ENCODE measurements at regions of chr4 and their contacts with region 1.

Region 1: DNA sequence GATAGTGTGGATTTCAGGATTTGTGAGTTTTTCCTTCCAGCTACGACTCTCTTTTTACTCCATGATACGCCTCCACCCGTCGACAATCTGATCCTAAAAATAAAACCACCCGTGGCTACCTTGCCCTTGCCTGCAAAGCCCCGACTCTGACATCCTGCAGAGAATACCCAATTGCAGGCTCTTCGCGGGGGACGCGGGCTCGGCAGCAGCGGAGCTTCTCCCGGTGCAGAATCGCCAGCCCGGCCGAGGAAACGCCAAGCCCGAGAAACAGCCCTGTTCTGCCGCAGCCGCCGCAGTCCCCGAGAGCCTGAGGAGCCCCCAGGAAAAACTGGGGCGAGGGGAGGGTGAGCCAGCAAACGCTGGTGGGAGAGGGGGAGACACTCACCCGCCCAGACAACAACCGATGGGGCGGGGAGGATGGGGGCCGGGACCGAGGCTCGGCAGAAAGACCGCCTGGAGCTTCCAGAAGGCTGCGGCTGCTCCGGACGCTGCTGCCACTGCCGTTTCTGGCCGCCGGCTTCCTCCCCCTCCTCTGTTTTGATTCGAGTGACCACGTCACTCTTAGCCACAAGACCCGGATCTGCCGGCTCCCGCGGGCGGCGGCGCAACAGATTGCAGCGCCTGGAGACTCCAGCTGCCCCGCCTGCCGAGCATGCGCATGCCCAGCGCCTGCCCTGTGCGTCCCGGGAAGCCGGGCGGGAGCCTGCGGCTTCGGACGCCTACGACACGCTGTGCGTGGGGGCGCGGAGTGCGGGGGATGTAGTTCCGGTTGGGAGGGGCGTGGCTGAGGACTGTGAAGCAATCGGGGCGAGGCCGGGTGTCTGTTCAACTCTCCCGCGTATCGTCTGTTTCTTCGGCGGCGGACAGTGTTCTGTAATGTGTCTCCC is at the start of gene SMIM14:
- DNase-seq: peak; percentile 92
- ATAC-seq: peak; percentile 82
- H3K4me3 Mint-ChIP-seq: peak within 1 kb of the TSS; percentile 96
- H3K27ac Mint-ChIP-seq: peak within 1 kb of the TSS; percentile 97
- H3K4me1 Mint-ChIP-seq: peaks cover 58% of the 10 kb centered on the region
- H3K27me3 Mint-ChIP-seq: no peaks in the 10 kb centered on the region
- CTCF ChIP-seq: no peak
- total RNA-seq, gene SMIM14: 83.1 and 86.5 TPM in 2 replicates

Region 2: GRCh38 chr4:38768968-38769394 is 869.6 kb before region 1 on chr4:
- CTCF ChIA-PET with region 1: no interaction called
- POLR2A ChIA-PET with region 1: no interaction called
- intact Hi-C with region 1: loop called (anchors 10 kb)
- DNase-seq: no peak
- ATAC-seq: peak; percentile 66
- H3K4me3 Mint-ChIP-seq: peak overlapping the region; percentile 30
- H3K27ac Mint-ChIP-seq: peak overlapping the region; percentile 79
- H3K4me1 Mint-ChIP-seq: peaks cover 80% of the 10 kb centered on the region
- H3K27me3 Mint-ChIP-seq: no peaks in the 10 kb centered on the region
- CTCF ChIP-seq: no peak

Region 3: DNA sequence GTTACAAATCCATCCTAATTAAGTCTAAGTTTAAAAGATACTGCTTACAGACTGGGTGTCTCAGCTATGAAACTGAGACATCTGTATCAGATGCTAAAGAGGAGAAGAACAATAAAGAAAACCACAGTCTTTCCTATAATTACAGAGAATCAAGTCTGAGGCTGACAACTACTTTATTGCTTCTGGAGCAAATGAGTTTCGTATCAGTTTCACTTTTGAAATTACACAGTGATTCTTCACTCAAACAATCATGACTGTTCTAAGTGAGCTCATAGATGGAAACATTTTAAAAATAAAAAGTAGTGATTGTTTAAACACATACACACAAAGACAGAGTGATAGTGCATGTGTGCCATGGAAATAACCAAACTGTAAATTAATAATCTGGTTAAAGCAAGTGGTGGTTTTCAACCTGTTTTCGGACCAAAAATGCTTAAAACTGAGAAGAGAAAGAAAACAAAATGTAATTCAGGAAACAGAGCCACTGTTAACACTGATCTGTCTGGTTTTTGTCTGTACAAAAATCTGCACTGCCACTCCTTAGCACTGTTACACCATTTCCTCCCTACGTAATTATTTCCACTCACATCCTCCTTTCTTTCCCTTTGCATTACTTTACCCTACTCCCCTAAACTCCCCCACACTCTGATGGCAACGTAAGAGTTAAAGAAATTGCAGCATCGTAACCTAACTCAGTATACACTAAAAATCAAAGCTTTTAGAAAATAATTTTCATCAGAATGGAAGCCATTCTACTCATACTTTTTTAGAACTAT is 284.9 kb before region 1 on chr4:
- CTCF ChIA-PET with region 1: no interaction called
- POLR2A ChIA-PET with region 1: no interaction called
- intact Hi-C with region 1: loop called (anchors 10 kb)
- DNase-seq: no peak
- ATAC-seq: peak; percentile 66
- H3K4me3 Mint-ChIP-seq: peak overlapping the region; percentile 69
- H3K27ac Mint-ChIP-seq: peak overlapping the region; percentile 87
- H3K4me1 Mint-ChIP-seq: peaks cover 59% of the 10 kb centered on the region
- H3K27me3 Mint-ChIP-seq: no peaks in the 10 kb centered on the region
- CTCF ChIP-seq: no peak

Region 4: GRCh38 chr4:39527273-39528060 is 111.1 kb before region 1 on chr4 and contains the start of gene UGDH:
- CTCF ChIA-PET with region 1: interaction called, 5 read pairs
- POLR2A ChIA-PET with region 1: interaction called, 113 read pairs
- intact Hi-C with region 1: loop called (anchors 1 kb)
- DNase-seq: peak; percentile 94
- ATAC-seq: peak; percentile 99
- H3K4me3 Mint-ChIP-seq: peak within 1 kb of the TSS; percentile 98
- H3K27ac Mint-ChIP-seq: peak within 1 kb of the TSS; percentile 93
- H3K4me1 Mint-ChIP-seq: peaks cover 20% of the 10 kb centered on the region
- H3K27me3 Mint-ChIP-seq: no peaks in the 10 kb centered on the region
- CTCF ChIP-seq: no peak
- total RNA-seq, gene UGDH: 40.6 and 43.3 TPM in 2 replicates

Region 5: DNA sequence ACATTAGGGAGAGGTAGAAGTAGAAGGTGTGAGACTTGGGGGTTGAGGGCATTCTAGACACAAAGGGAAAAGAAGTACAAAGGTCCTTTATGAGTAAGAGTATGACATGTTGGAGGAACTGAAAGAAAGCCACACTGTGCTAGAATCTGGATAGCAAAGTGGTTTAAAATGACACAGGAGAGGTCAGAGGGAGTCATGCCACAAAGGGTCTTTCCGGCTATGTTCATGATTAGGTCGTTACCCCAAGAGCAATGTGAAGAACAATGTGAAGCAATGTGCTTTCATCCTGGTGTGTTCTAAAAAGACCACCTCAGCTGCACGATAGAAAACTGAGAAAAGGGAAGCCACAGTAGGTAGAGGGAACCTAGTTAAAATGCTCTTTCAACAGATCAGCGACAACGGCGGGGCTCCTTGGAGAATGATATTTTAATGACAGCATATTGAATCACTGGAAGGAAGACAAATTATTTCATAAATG is 29.1 kb before region 1 on chr4:
- CTCF ChIA-PET with region 1: interaction called, 8 read pairs
- POLR2A ChIA-PET with region 1: interaction called, 137 read pairs
- intact Hi-C with region 1: loop called (anchors 1 kb)
- DNase-seq: no peak
- ATAC-seq: peak; percentile 84
- H3K4me3 Mint-ChIP-seq: peak overlapping the region; percentile 75
- H3K27ac Mint-ChIP-seq: peak overlapping the region; percentile 88
- H3K4me1 Mint-ChIP-seq: peaks cover 67% of the 10 kb centered on the region
- H3K27me3 Mint-ChIP-seq: no peaks in the 10 kb centered on the region
- CTCF ChIP-seq: no peak

Region 6: GRCh38 chr4:39657465-39657864 is 18.9 kb after region 1 on chr4:
- CTCF ChIA-PET with region 1: interaction called, 3 read pairs
- POLR2A ChIA-PET with region 1: interaction called, 56 read pairs
- intact Hi-C with region 1: loop called (anchors 1 kb)
- DNase-seq: no peak
- ATAC-seq: peak; percentile 91
- H3K4me3 Mint-ChIP-seq: peak overlapping the region; percentile 71
- H3K27ac Mint-ChIP-seq: peak overlapping the region; percentile 81
- H3K4me1 Mint-ChIP-seq: peaks cover 35% of the 10 kb centered on the region
- H3K27me3 Mint-ChIP-seq: no peaks in the 10 kb centered on the region
- CTCF ChIP-seq: no peak

Region 7: DNA sequence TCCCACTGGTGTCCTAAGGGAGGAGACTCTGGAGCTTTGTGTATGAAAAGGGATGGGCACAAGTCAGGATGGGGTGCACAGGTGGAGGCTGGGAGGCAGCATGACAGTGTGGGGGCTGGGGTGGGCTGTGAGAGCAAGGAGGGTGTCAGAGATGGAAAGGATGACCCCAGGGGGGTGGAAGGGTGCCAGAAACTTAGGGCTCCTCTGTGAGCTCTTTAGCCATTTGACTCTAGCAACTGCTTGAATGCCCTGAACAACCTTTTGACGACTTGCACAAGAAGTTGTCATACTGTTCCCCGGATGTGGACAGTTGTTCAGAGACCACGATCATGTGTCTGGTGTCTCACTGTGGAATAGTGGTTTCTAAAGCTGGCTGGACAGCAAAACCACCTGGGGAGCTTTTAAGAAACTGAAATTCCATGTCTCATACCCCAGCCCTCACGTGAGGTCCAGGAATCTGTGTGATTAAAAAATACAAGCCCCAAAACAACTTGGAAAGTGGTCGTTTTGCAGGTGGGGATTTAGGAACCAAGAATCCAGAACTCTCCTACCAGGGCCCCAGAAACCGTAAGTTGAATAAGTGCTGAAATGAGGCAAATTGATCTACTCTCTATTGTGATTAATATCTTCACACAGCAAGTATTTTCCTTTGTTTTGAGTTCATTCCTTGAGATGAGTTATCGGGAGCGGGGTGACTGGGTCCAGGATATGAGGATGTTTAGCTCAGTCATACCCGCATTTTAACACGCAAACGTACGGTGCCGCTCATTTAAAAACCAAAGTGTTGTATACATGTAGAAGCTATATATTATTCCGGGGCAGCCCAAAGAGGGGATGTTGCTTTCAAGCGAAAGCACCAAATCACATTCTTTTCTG is 561.6 kb after region 1 on chr4:
- CTCF ChIA-PET with region 1: no interaction called
- POLR2A ChIA-PET with region 1: interaction called, 3 read pairs
- intact Hi-C with region 1: loop called (anchors 5 kb)
- DNase-seq: no peak
- ATAC-seq: peak; percentile 20
- H3K4me3 Mint-ChIP-seq: peak overlapping the region; percentile 97
- H3K27ac Mint-ChIP-seq: peak overlapping the region; percentile 95
- H3K4me1 Mint-ChIP-seq: peaks cover 67% of the 10 kb centered on the region
- H3K27me3 Mint-ChIP-seq: no peaks in the 10 kb centered on the region
- CTCF ChIP-seq: no peak

Measured in activated B cell treated with CpG ODN at 0.5 μM for 24 hours (primary cell).